ENCODE measurements at regions of chr4 and their contacts with region 1.

Region 1: GRCh38 chr4:161949946-161950725 is 213.7 kb downstream of the FSTL5 start:
- DNase-seq: peak; percentile 13
- H3K4me3 ChIP-seq: no peak overlapping the region
- H3K27me3 ChIP-seq: no peaks in the 10 kb centered on the region
- CTCF ChIP-seq: no peak

Region 2: DNA sequence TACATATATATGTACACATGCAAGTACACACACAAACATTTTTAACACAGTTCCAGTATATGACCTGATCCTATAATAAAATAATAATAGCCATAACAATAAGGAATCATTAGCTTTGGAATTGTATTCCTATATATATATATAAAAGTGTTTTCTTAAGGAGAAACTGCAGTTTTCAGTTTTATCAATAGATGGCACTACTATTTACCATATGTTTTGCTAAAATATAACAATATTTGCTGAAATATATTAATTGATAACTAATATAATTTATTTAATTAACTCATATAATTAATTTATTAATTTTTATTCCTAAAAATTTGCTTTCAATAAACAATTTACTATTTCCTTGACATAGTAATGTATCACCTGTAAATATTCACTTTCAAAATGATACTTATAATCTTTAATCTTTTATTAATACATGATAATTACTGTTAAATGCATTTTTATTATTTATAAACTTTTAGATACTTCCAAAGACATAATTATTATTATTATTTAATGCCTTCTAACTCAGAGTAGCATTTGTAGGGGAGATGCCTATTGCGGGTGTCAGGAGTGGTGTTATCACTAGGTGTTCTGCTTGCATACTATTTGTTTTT is 385.8 kb before region 1 on chr4:
- CTCF ChIA-PET with region 1: no interaction called
- POLR2A ChIA-PET with region 1: interaction called, 11 read pairs
- DNase-seq: no peak
- H3K4me3 ChIP-seq: no peak overlapping the region
- H3K27me3 ChIP-seq: no peaks in the 10 kb centered on the region
- CTCF ChIP-seq: peak; percentile 26; the same call in 1 of the 2 replicates